ENCODE measurements at regions of chr11 and their contacts with region 1.

Region 1: DNA sequence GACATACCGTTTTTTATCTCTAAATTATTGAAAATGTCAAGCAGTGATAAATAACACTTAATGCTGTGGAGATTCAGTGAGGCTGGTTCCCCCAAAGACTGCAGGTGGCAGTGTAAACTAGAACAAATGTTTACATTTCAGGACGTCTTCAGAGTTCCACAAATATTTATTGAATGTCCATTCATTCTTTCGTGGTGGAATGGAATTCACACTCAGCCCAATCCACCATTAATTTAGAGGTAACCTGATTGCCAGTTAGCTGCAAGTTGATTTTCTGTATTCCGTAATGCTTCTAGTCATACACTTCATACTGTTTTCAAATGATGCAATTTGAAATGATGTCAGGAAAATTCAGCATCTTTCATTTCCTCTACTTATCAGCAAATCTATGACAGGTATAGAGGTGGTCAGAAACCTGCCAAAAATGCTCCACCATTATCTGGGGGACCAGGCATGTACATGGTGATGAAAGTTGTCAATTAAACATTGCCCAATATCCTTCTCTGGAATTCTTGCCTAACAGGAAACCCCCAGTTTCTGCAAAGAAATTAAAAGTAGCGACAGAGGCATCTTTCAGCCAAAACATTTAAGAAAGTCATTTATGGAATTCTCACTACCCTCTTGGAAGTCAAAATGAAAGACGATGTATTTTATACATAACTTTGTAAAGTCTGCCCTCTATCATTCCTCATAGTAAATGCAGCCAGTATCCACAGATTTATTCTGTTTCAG is 94.3 kb upstream of the BMAL1 start:
- DNase-seq: peak in 1 of 2 experiments; percentile 22
- H3K4me3 ChIP-seq: no peak overlapping the region
- H3K4me3 Mint-ChIP-seq: peak overlapping the region; percentile 10
- H3K27ac Mint-ChIP-seq: no peak overlapping the region
- H3K4me1 ChIP-seq: peaks cover 6% of the 10 kb centered on the region
- H3K4me1 Mint-ChIP-seq: no peaks in the 10 kb centered on the region
- H3K27me3 ChIP-seq: no peaks in the 10 kb centered on the region
- H3K27me3 Mint-ChIP-seq: peaks cover 2% of the 10 kb centered on the region
- CTCF ChIP-seq: peak; percentile 41 to 53

Region 2: GRCh38 chr11:13238879-13239514 is 55.7 kb after region 1 on chr11:
- CTCF ChIA-PET with region 1: no interaction called
- POLR2A ChIA-PET with region 1: no interaction called
- intact Hi-C with region 1: loop called (anchors 1 kb)
- DNase-seq: peak; percentile 53 to 65
- H3K4me3 ChIP-seq: no peak overlapping the region
- H3K4me3 Mint-ChIP-seq: no peak overlapping the region
- H3K27ac Mint-ChIP-seq: no peak overlapping the region
- H3K4me1 ChIP-seq: no peaks in the 10 kb centered on the region
- H3K4me1 Mint-ChIP-seq: no peaks in the 10 kb centered on the region
- H3K27me3 ChIP-seq: no peaks in the 10 kb centered on the region
- H3K27me3 Mint-ChIP-seq: peaks cover 10% of the 10 kb centered on the region
- CTCF ChIP-seq: peak; percentile 87 to 89

Measured in Caco-2 (cell line).